CD4-positive, alpha-beta memory T cell (primary cell): ENCODE measurements at regions of chr3 and their contacts with region 1.

Region 1: DNA sequence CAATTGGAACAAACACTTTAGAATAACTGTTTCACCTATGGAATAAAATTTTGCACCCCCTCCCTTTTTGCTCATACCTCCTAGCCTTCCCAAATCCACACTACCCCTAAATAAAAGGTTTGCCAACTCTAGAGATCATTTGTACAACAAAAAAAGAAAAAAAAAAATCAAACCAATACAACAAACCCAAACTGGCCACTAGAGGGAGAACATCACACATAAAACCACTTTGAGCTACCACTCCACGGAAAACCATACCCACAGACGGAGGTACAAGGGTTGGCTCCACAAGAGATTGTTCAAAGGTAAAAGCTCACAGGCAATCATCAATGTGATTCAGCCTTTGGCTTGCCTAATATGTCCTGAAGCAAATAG is 47.6 kb downstream of the SETMAR start:
- DNase-seq: peak; percentile 65 to 72 (median 70)
- H3K4me3 ChIP-seq: peak overlapping the region in 1 of 2 donors; percentile 45
- H3K4me3 Mint-ChIP-seq: peak overlapping the region; percentile 59 to 84 (median 76)
- H3K27ac ChIP-seq: no peak overlapping the region
- H3K27ac Mint-ChIP-seq: peak overlapping the region in 5 of 7 donors; percentile 20 to 66 (median 33)
- H3K4me1 ChIP-seq: peaks cover 4% of the 10 kb centered on the region
- H3K4me1 Mint-ChIP-seq: peaks cover 8 to 18% (median 10%) of the 10 kb centered on the region in 4 donors
- H3K27me3 ChIP-seq: no peaks in the 10 kb centered on the region
- H3K27me3 Mint-ChIP-seq: no peaks in the 10 kb centered on the region

Region 2: GRCh38 chr3:4207672-4208071 is 143.1 kb before region 1 on chr3:
- CTCF ChIA-PET with region 1: no interaction called
- POLR2A ChIA-PET with region 1: no interaction called
- intact Hi-C with region 1: no loop called
- DNase-seq: no peak
- H3K4me3 ChIP-seq: no peak overlapping the region
- H3K4me3 Mint-ChIP-seq: no peak overlapping the region
- H3K27ac ChIP-seq: no peak overlapping the region
- H3K27ac Mint-ChIP-seq: no peak overlapping the region
- H3K4me1 ChIP-seq: no peaks in the 10 kb centered on the region
- H3K4me1 Mint-ChIP-seq: no peaks in the 10 kb centered on the region
- H3K27me3 ChIP-seq: no peaks in the 10 kb centered on the region
- H3K27me3 Mint-ChIP-seq: no peaks in the 10 kb centered on the region

Region 3: DNA sequence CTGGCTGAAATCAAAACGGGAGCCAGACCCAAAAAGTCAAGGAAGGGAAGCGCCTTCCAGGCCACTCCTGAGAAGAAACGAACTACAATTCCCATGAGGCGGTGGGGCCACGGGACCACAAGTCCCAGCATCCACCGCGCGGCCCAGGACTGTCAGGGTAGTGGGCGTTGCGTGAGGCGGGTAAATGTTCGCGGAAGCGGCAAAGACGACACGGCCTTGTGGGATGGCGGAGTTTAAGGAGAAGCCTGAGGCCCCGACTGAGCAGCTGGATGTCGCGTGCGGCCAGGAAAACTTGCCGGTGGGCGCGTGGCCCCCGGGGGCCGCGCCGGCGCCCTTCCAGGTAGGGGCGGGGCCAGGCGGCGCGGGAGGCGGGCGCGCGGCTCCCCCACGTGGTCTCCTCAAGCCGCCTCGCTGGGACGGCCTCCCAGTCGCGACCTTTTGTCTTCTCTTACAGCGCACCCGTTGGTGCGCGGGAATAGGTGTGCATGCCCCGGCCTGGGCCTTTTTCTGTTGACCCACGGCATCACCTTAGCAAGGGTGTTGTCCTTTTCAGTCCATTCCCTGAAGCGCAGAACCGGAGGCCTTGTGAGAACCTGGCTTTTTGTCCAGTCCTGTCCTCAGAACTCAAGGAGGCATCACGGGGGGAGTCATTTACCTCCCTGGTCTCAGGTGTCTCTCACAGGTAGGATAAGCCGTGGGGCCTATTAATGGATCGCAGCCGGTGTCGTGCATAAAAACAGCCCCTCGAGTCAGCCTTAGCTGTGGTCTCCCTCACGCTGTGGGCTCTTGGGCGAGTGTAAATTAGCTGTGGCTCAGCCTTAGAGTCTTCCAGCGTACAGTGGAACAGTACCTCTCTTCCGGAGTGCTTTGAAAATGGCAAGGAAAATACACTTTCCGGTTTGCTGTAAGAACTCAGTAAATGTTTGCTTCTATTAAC is 47.3 kb before region 1 on chr3 and contains the start of gene SETMAR:
- CTCF ChIA-PET with region 1: interaction called, 13 read pairs
- POLR2A ChIA-PET with region 1: interaction called, 4 read pairs
- intact Hi-C with region 1: no loop called
- DNase-seq: peak; percentile 82 to 85 (median 82)
- H3K4me3 ChIP-seq: peak within 1 kb of the TSS; percentile 68 to 99
- H3K4me3 Mint-ChIP-seq: peak within 1 kb of the TSS; percentile 97 to 99 (median 97)
- H3K27ac ChIP-seq: peak within 1 kb of the TSS; percentile 87
- H3K27ac Mint-ChIP-seq: peak within 1 kb of the TSS; percentile 92 to 100 (median 99)
- H3K4me1 ChIP-seq: peaks cover 23% of the 10 kb centered on the region
- H3K4me1 Mint-ChIP-seq: peaks cover 8 to 33% (median 16%) of the 10 kb centered on the region in 4 donors
- H3K27me3 ChIP-seq: no peaks in the 10 kb centered on the region
- H3K27me3 Mint-ChIP-seq: no peaks in the 10 kb centered on the region
- total RNA-seq, gene SETMAR: 11.1 to 11.5 TPM

Region 4: GRCh38 chr3:4340411-4341335 is 10.1 kb before region 1 on chr3:
- CTCF ChIA-PET with region 1: interaction called, 29 read pairs
- POLR2A ChIA-PET with region 1: interaction called, 3 read pairs
- intact Hi-C with region 1: no loop called
- DNase-seq: no peak
- H3K4me3 ChIP-seq: no peak overlapping the region
- H3K4me3 Mint-ChIP-seq: no peak overlapping the region
- H3K27ac ChIP-seq: no peak overlapping the region
- H3K27ac Mint-ChIP-seq: peak overlapping the region in 1 of 7 donors; percentile 32
- H3K4me1 ChIP-seq: no peaks in the 10 kb centered on the region
- H3K4me1 Mint-ChIP-seq: no peaks in the 10 kb centered on the region
- H3K27me3 ChIP-seq: no peaks in the 10 kb centered on the region
- H3K27me3 Mint-ChIP-seq: no peaks in the 10 kb centered on the region

Region 5: DNA sequence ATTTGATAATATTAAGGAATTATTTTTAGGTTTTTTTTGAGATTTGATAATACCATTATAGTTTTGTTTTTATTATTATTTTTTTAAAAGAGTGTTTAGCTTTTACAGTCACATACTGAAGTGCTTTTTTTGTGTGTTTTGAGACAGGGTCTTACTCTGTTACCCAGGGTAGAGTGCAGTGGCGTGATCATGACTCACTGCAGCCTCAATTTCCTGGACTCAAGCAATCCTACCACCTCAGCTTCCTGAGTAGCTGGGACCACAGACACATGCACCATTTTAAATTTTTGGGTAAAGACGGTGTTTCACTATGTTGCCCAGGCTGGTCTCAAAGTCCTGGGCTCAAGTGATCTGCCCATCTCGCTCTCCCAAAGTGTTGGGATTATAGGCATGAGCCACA is 43.3 kb after region 1 on chr3:
- CTCF ChIA-PET with region 1: interaction called, 8 read pairs
- POLR2A ChIA-PET with region 1: no interaction called
- intact Hi-C with region 1: loop called (anchors 1 kb)
- DNase-seq: peak in 3 of 5 donors; percentile 3 to 56 (median 11)
- H3K4me3 ChIP-seq: no peak overlapping the region
- H3K4me3 Mint-ChIP-seq: peak overlapping the region in 6 of 8 donors; percentile 11 to 65 (median 26)
- H3K27ac ChIP-seq: no peak overlapping the region
- H3K27ac Mint-ChIP-seq: peak overlapping the region in 2 of 7 donors; percentile 35 to 36
- H3K4me1 ChIP-seq: peaks cover 10% of the 10 kb centered on the region
- H3K4me1 Mint-ChIP-seq: peaks cover 14 to 43% (median 28%) of the 10 kb centered on the region in 4 donors
- H3K27me3 ChIP-seq: no peaks in the 10 kb centered on the region
- H3K27me3 Mint-ChIP-seq: no peaks in the 10 kb centered on the region

Region 6: GRCh38 chr3:4524088-4525023 is 173.6 kb after region 1 on chr3:
- CTCF ChIA-PET with region 1: interaction called, 14 read pairs
- POLR2A ChIA-PET with region 1: no interaction called
- intact Hi-C with region 1: loop called (anchors 1 kb)
- DNase-seq: no peak
- H3K4me3 ChIP-seq: no peak overlapping the region
- H3K4me3 Mint-ChIP-seq: no peak overlapping the region
- H3K27ac ChIP-seq: no peak overlapping the region
- H3K27ac Mint-ChIP-seq: no peak overlapping the region
- H3K4me1 ChIP-seq: peaks cover 6% of the 10 kb centered on the region
- H3K4me1 Mint-ChIP-seq: peaks cover 8 to 23% (median 16%) of the 10 kb centered on the region in 4 donors
- H3K27me3 ChIP-seq: no peaks in the 10 kb centered on the region
- H3K27me3 Mint-ChIP-seq: no peaks in the 10 kb centered on the region

Region 7: GRCh38 chr3:4584456-4585249 is 233.9 kb after region 1 on chr3:
- CTCF ChIA-PET with region 1: interaction called, 23 read pairs
- POLR2A ChIA-PET with region 1: interaction called, 3 read pairs
- intact Hi-C with region 1: loop called (anchors 1 kb)
- DNase-seq: peak in 4 of 5 donors; percentile 16 to 25 (median 20)
- H3K4me3 ChIP-seq: peak overlapping the region in 1 of 2 donors; percentile 35
- H3K4me3 Mint-ChIP-seq: peak overlapping the region; percentile 82 to 94 (median 88)
- H3K27ac ChIP-seq: peak overlapping the region; percentile 8
- H3K27ac Mint-ChIP-seq: peak overlapping the region; percentile 45 to 97 (median 93)
- H3K4me1 ChIP-seq: peaks cover 63% of the 10 kb centered on the region
- H3K4me1 Mint-ChIP-seq: peaks cover 39 to 80% (median 54%) of the 10 kb centered on the region in 4 donors
- H3K27me3 ChIP-seq: no peaks in the 10 kb centered on the region
- H3K27me3 Mint-ChIP-seq: no peaks in the 10 kb centered on the region

Region 8: GRCh38 chr3:4712143-4712542 is 361.4 kb after region 1 on chr3:
- CTCF ChIA-PET with region 1: interaction called, 17 read pairs
- POLR2A ChIA-PET with region 1: interaction called, 6 read pairs
- intact Hi-C with region 1: no loop called
- DNase-seq: no peak
- H3K4me3 ChIP-seq: no peak overlapping the region
- H3K4me3 Mint-ChIP-seq: no peak overlapping the region
- H3K27ac ChIP-seq: no peak overlapping the region
- H3K27ac Mint-ChIP-seq: no peak overlapping the region
- H3K4me1 ChIP-seq: no peaks in the 10 kb centered on the region
- H3K4me1 Mint-ChIP-seq: peaks cover 0 to 5% (median under 1%) of the 10 kb centered on the region in 4 donors
- H3K27me3 ChIP-seq: no peaks in the 10 kb centered on the region
- H3K27me3 Mint-ChIP-seq: no peaks in the 10 kb centered on the region